ENCODE measurements at regions of chr11 and their contacts with region 1.

Region 1: GRCh38 chr11:57562596-57562995 is 4.9 kb downstream of the UBE2L6 start:
- DNase-seq: no peak
- ATAC-seq: no peak
- H3K4me3 ChIP-seq: no peak overlapping the region
- H3K27ac ChIP-seq: no peak overlapping the region
- H3K4me1 ChIP-seq: peaks cover 0 to 60% (median 13%) of the 10 kb centered on the region in 12 donors
- H3K27me3 ChIP-seq: no peaks in the 10 kb centered on the region
- CTCF ChIP-seq: no peak
- POLR2A ChIP-seq: no peak

Region 2: GRCh38 chr11:57597916-57598830 is 35.6 kb after region 1 on chr11:
- intact Hi-C with region 1: loop called in 1 of 10 experiments (anchors 5 kb)
- DNase-seq: peak; percentile 82 to 90 (median 87)
- ATAC-seq: peak; percentile 88 to 96 (median 95)
- H3K4me3 ChIP-seq: peak overlapping the region; percentile 33 to 83 (median 60)
- H3K27ac ChIP-seq: peak overlapping the region; percentile 86 to 97 (median 89)
- H3K4me1 ChIP-seq: peaks cover 0 to 26% (median 6%) of the 10 kb centered on the region in 12 donors
- H3K27me3 ChIP-seq: peaks cover 0 to 4% (median 0%) of the 10 kb centered on the region in 9 donors
- CTCF ChIP-seq: no peak
- POLR2A ChIP-seq: no peak

Region 3: DNA sequence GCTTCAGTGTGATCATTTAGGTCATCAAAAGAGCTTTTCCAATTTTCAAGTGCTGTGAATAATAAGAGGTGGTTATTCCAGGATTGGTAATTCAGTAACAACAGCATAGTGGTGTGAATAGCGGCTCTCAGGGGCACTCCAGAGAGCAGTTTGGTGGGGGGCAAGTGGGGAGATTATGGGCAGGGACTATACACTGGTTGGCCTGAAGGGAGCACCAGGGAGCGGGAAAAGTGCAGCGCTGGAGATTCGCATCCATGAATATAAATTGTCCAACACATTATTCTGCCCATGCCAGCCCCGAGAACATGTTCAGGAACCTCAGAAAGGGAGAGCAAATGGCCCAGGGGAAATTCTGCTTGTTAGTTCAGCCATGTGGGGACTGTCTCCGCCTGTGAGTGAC is 506.1 kb after region 1 on chr11:
- intact Hi-C with region 1: loop called in 1 of 10 experiments (anchors 5 kb)
- DNase-seq: no peak
- ATAC-seq: no peak
- H3K4me3 ChIP-seq: no peak overlapping the region
- H3K27ac ChIP-seq: no peak overlapping the region
- H3K4me1 ChIP-seq: no peaks in the 10 kb centered on the region
- H3K27me3 ChIP-seq: no peaks in the 10 kb centered on the region
- CTCF ChIP-seq: no peak
- POLR2A ChIP-seq: no peak

Measured in heart left ventricle (tissue), 16 donors.